Activated CD4-positive, alpha-beta T cell treated with anti-CD3 and anti-CD28 coated beads for 36 hours (primary cell): ENCODE measurements at regions of chr9 and their contacts with region 1.

Region 1: GRCh38 chr9:117411548-117411947 is 3.3 kb downstream of the ASTN2 start:
- DNase-seq: peak; percentile 20
- ATAC-seq: no peak
- H3K4me3 Mint-ChIP-seq: no peak overlapping the region
- H3K27ac Mint-ChIP-seq: no peak overlapping the region
- H3K4me1 Mint-ChIP-seq: no peaks in the 10 kb centered on the region
- H3K27me3 Mint-ChIP-seq: peaks cover 24% of the 10 kb centered on the region

Region 2: GRCh38 chr9:117545846-117546245 is 134.3 kb after region 1 on chr9:
- CTCF ChIA-PET with region 1: no interaction called
- POLR2A ChIA-PET with region 1: interaction called, 11 read pairs
- intact Hi-C with region 1: no loop called
- DNase-seq: no peak
- ATAC-seq: no peak
- H3K4me3 Mint-ChIP-seq: no peak overlapping the region
- H3K27ac Mint-ChIP-seq: no peak overlapping the region
- H3K4me1 Mint-ChIP-seq: peaks cover 7% of the 10 kb centered on the region
- H3K27me3 Mint-ChIP-seq: no peaks in the 10 kb centered on the region